Spleen (tissue), 13 donors: ENCODE measurements at regions of chr9 and their contacts with region 1.

Region 1: GRCh38 chr9:132800038-132800648 is 77.9 kb downstream of the AK8 start:
- DNase-seq: peak; percentile 85
- H3K4me3 ChIP-seq: no peak overlapping the region
- H3K27ac ChIP-seq: no peak overlapping the region
- H3K4me1 ChIP-seq: peaks cover 0 to 26% (median 6%) of the 10 kb centered on the region in 6 donors
- H3K27me3 ChIP-seq: peaks cover 0 to 46% (median 0%) of the 10 kb centered on the region in 7 donors
- CTCF ChIP-seq: peak; percentile 88 to 95 (median 92)
- POLR2A ChIP-seq: no peak

Region 2: DNA sequence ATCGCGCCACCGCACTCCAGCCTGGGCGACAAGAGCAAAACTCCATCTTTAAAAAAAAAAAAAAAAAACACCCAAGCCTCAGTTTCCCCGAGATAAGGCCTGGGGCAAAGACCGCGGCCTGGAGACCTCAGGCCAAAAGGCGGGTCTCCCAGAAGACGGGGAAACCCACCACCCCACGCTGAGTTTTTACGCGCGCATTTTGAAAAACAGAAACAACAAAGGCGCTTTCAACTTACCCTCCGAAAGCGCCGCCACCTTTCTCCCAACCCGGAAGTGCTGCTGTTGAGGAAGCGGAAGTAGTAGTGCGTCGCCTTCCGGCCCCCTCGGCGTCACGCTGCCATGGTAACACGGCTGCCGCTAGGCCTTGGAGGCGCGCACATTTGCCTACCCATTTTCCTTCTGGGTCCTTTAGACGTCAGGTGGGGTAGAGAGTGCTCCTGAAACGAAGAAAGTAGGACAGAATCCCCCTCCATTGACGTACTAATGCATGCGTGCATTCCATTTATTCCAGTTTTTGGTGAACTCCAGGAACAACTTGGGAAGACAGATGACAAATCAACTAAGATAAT is 393.5 kb before region 1 on chr9 and contains the start of gene TTF1:
- intact Hi-C with region 1: loop called (anchors 2 kb)
- DNase-seq: peak; percentile 97
- H3K4me3 ChIP-seq: peak within 1 kb of the TSS; percentile 82 to 98 (median 87)
- H3K27ac ChIP-seq: peak within 1 kb of the TSS in 6 of 8 donors; percentile 43 to 83 (median 75)
- H3K4me1 ChIP-seq: peaks cover 45 to 71% (median 63%) of the 10 kb centered on the region in 6 donors
- H3K27me3 ChIP-seq: peaks cover 0 to 26% (median 19%) of the 10 kb centered on the region in 7 donors
- CTCF ChIP-seq: no peak
- POLR2A ChIP-seq: peak in 2 of 3 donors; percentile 22 to 26
- total RNA-seq, gene TTF1: 12.1 to 18.5 (median 14.6) TPM

Region 3: GRCh38 chr9:132507746-132508469 is 292.2 kb before region 1 on chr9:
- intact Hi-C with region 1: loop called (anchors 5 kb)
- DNase-seq: peak; percentile 78
- H3K4me3 ChIP-seq: no peak overlapping the region
- H3K27ac ChIP-seq: no peak overlapping the region
- H3K4me1 ChIP-seq: peaks cover 2 to 18% (median 10%) of the 10 kb centered on the region in 6 donors
- H3K27me3 ChIP-seq: peaks cover 0 to 52% (median 0%) of the 10 kb centered on the region in 7 donors
- CTCF ChIP-seq: peak; percentile 47 to 85 (median 78)
- POLR2A ChIP-seq: no peak

Region 4: GRCh38 chr9:132694157-132694556 is 106.0 kb before region 1 on chr9:
- intact Hi-C with region 1: loop called (anchors 10 kb)
- DNase-seq: no peak
- H3K4me3 ChIP-seq: no peak overlapping the region
- H3K27ac ChIP-seq: no peak overlapping the region
- H3K4me1 ChIP-seq: no peaks in the 10 kb centered on the region
- H3K27me3 ChIP-seq: no peaks in the 10 kb centered on the region
- CTCF ChIP-seq: peak in 2 of 11 experiments; percentile 8 to 13
- POLR2A ChIP-seq: no peak